Activated naive CD4-positive, alpha-beta T cell treated with anti-CD3 and anti-CD28 coated beads, Interleukin-2, amount 10 ng/mL, durations not matched to agents 7 days and 5 days (primary cell): ENCODE measurements at regions of chr16 and their contacts with region 1.

Region 1: GRCh38 chr16:53054670-53055485 is at the start of gene CHD9:
- DNase-seq: peak; percentile 78
- H3K4me3 Mint-ChIP-seq: peak within 1 kb of the TSS; percentile 79
- H3K27ac Mint-ChIP-seq: peak within 1 kb of the TSS; percentile 75
- H3K4me1 Mint-ChIP-seq: peaks cover 33% of the 10 kb centered on the region
- H3K27me3 Mint-ChIP-seq: peaks cover 8% of the 10 kb centered on the region

Region 2: DNA sequence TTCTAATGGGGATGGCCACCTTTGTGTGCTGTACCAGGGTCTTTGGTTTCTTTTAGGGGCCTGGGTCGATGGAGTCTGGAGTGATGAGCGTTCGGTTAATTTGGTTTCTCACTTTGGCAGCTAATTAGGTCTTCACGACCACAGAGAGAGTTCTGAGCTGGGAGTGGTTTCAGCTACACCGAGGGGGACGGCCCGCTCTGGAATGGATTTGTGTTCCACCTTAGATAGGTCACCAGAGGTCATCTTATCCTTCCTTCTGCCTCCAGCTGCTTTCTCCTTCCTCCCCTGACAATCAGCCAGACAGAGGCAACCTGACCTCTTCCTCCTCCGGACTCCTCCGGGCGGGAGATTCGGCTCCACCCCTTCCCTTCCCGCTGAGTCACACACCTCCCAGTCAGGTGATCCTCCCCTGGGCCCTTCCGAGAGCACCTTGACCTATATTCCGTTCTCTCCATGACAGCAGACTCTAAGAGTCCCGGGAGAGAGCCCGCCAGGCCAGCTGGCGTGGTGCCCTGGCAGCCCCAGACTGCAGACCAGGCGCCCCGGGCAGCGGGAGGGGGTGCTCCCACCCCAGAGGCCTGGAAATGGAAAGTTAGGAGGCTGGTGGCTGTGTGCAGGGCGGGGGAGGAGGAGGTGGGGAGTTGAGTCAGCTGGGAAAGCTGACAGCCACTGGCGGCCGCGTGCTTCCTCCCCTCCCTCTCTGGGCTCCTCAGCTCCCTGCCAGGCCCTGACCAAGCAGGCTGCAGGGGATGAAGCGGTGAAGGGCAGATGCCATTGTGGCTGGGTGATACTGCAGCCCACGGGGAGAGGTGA is 44.6 kb after region 1 on chr16:
- CTCF ChIA-PET with region 1: interaction called, 10 read pairs
- DNase-seq: peak; percentile 66
- H3K4me3 Mint-ChIP-seq: peak overlapping the region; percentile 54
- H3K27ac Mint-ChIP-seq: peak overlapping the region; percentile 88
- H3K4me1 Mint-ChIP-seq: peaks cover 28% of the 10 kb centered on the region
- H3K27me3 Mint-ChIP-seq: no peaks in the 10 kb centered on the region

Region 3: GRCh38 chr16:53123747-53124146 is 68.9 kb after region 1 on chr16:
- CTCF ChIA-PET with region 1: no interaction called
- DNase-seq: no peak
- H3K4me3 Mint-ChIP-seq: no peak overlapping the region
- H3K27ac Mint-ChIP-seq: no peak overlapping the region
- H3K4me1 Mint-ChIP-seq: no peaks in the 10 kb centered on the region
- H3K27me3 Mint-ChIP-seq: no peaks in the 10 kb centered on the region

Region 4: GRCh38 chr16:53159781-53160436 is 105.0 kb after region 1 on chr16:
- CTCF ChIA-PET with region 1: interaction called, 21 read pairs
- DNase-seq: no peak
- H3K4me3 Mint-ChIP-seq: no peak overlapping the region
- H3K27ac Mint-ChIP-seq: no peak overlapping the region
- H3K4me1 Mint-ChIP-seq: no peaks in the 10 kb centered on the region
- H3K27me3 Mint-ChIP-seq: no peaks in the 10 kb centered on the region

Region 5: GRCh38 chr16:53207810-53208752 is 153.2 kb after region 1 on chr16:
- CTCF ChIA-PET with region 1: interaction called, 17 read pairs
- DNase-seq: no peak
- H3K4me3 Mint-ChIP-seq: peak overlapping the region; percentile 64
- H3K27ac Mint-ChIP-seq: peak overlapping the region; percentile 87
- H3K4me1 Mint-ChIP-seq: peaks cover 12% of the 10 kb centered on the region
- H3K27me3 Mint-ChIP-seq: no peaks in the 10 kb centered on the region

Region 6: DNA sequence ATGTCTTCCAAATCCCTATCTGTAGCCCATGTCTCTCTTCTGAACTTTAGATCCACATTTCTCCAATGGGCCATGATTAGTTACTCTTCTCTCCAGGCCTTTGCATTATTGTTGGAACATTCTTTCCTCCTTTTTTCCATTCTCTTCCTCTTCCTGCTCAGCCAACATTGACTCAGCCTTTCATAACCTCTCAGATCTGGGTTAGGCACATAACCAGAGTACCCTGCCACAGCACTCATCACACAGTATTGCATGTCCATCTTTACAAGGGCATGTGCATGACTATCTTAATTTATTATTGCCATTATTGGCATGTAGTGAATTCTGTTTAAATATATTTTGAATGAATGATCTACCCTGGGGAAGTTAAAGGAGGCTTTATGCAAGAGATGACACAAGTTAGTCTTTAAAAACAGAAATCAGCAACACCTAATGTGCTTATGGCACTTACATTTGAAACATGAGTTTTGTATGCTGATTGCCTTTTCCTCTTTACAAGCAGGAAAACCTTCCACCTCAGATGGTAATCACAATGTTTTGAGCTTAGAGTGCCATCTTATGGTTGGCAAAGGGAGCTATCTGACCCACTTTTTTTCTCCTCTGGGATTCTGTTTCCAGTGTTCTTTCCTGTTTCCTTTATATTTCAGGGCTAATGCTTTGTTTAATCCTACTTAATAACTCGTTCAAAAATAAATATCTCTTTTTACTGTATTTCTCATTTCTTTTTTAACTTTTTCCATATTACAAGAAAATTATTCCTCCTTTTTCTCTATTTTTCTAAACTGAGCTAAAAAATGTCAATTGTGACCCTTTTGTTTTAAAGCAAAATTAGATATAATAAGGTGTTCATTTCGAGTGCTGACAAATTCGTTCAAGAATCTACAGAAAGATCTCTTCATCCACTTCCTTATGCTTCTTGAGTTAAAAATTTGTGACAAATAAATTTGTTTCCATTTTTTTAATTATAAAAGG is 228.4 kb after region 1 on chr16:
- CTCF ChIA-PET with region 1: interaction called, 11 read pairs
- DNase-seq: no peak
- H3K4me3 Mint-ChIP-seq: no peak overlapping the region
- H3K27ac Mint-ChIP-seq: no peak overlapping the region
- H3K4me1 Mint-ChIP-seq: no peaks in the 10 kb centered on the region
- H3K27me3 Mint-ChIP-seq: no peaks in the 10 kb centered on the region